ENCODE measurements at regions of chr17 and their contacts with region 1.

Region 1: DNA sequence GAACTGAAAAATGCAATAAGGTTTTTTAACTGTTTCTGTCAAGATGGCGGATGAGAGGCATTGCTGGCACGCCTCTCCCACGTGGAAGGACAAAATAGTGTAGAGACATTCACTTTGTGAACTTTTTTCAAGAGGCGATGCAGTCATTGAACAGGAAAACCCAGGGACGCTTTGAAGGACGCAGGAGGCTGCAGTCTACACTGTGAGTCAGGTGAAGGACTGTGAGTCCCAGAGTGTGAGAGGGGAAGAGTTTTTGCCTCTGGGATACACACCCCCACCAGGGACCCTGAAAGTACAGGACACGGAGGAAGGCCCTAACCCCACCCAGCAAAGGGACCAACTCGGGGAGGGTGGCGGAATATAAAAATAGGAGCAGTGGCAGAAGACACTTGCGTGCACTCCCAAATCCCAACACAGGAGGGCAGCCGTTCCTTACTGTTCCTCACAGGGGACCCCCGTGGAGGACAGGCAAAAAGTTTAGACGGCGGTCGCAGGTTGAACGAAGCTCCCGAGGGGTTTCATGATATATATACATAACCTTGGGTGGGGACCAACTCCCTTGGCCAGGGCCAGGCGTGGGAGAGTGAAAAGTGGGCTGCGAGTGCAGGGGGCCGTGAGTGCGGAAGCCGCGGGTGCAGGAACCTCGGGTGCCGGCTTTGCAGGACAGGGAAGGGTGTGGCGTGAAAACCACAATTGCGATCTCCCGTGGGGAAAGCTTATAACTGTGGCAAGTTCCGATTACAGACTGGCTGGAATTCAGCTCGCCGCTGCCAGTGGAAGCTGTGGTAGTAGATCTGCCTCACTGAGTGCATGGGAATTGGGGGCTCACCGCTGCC is 82.0 kb upstream of the ALOX12 start:
- DNase-seq: peak; percentile 52 to 84 (median 68)
- H3K4me3 ChIP-seq: peak overlapping the region; percentile 60
- H3K4me3 Mint-ChIP-seq: peak overlapping the region in 6 of 7 donors; percentile 74 to 94 (median 84)
- H3K27ac ChIP-seq: no peak overlapping the region
- H3K27ac Mint-ChIP-seq: peak overlapping the region in 5 of 8 donors; percentile 5 to 93 (median 77)
- H3K4me1 ChIP-seq: peaks cover 5% of the 10 kb centered on the region
- H3K4me1 Mint-ChIP-seq: peaks cover 8 to 15% (median 13%) of the 10 kb centered on the region in 3 donors
- H3K27me3 ChIP-seq: no peaks in the 10 kb centered on the region
- H3K27me3 Mint-ChIP-seq: peaks cover 4 to 15% of the 10 kb centered on the region in 2 donors

Region 2: DNA sequence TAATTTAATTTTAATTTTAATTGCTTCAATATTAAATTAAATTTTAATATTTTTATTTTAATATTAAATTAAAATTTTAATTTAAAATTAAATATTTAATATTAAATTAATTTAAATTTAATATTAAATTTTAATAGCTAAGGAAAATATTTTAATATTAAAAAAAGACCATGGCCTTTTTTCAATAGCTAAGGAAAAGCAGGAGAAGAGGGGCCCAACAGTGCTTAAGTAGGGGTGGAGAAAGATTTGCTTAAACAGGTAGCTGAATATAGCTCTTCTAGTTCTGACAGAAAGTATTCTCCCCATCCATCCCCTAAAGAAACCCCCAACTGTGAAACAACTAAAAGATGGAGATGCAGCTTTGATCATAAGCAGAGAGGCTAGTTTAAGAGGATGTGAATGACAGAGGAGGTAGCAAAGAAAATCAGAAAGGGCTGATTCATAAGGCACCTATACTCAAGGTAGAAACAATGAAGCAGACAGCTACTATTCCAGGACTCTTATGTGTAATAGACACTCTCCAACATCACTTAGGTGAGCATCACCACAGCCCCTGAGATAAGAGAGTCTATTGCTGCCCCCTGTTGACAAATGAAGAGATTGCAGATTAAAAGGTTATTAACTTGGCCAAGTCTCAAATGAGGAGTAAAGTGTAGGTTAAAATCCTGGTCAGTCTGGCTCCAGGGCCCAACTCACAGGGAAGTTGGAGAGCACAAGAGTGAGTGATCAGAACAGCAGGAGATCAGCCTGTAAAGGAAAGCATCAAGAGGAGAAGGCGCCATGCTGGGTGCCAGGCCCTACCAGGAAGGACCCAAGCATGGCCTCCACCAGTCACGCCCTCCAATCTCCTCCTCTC is 90.8 kb after region 1 on chr17:
- CTCF ChIA-PET with region 1: interaction called, 98 read pairs
- POLR2A ChIA-PET with region 1: interaction called, 3 read pairs
- DNase-seq: peak in 2 of 5 donors; percentile 69 to 76
- H3K4me3 ChIP-seq: no peak overlapping the region
- H3K4me3 Mint-ChIP-seq: peak overlapping the region in 1 of 7 donors; percentile 18
- H3K27ac ChIP-seq: no peak overlapping the region
- H3K27ac Mint-ChIP-seq: peak overlapping the region in 7 of 8 donors; percentile 7 to 88 (median 67)
- H3K4me1 ChIP-seq: peaks cover 3% of the 10 kb centered on the region
- H3K4me1 Mint-ChIP-seq: peaks cover 25 to 39% (median 36%) of the 10 kb centered on the region in 3 donors
- H3K27me3 ChIP-seq: no peaks in the 10 kb centered on the region
- H3K27me3 Mint-ChIP-seq: peaks cover 0 to 1% of the 10 kb centered on the region in 2 donors

Region 3: DNA sequence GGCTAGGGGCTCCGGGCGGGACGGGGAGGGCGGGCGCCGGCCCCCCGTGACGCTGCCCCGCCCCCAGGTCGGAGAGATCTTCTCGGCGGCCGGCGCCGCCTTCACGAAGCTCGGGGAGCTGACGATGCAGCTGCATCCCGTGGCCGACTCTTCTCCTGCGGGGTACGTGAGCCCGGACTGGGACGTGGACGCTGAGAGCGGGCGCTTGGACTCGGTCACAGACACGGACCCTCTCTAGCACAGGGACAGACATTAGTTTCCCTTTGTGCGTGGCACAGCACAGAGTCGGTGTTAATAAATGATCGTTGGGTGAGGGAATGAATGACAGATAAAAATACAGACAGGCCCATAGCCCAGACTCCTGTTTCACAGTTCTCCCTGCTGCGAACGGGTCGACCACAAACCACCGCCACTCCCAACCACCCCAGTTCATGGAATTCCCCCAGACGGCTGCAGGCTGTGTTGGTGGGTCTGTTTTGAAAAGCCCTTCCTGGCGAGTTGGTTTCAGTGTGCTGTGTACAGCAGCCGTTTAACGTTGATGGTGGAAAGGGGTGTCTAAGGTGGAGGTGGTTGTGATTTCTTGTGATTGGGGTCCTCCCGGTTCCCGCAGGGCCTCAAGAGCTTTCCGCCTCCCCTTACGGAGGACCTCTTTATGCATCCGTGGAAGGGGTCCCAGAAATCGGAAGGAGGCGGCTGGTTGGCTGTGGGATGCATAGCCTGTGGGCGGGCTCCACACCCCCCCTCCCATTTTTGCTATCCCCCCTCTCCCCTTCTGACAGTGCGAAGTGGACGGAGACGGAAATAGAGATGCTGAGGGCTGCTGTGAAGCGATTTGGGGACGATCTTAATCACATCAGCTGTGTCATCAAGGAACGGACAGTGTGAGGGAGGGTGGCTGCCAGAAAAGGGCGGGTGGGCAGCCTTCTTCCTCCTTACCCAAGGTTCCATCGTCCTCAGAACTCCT is 101.5 kb after region 1 on chr17:
- CTCF ChIA-PET with region 1: interaction called, 51 read pairs
- POLR2A ChIA-PET with region 1: interaction called, 3 read pairs
- DNase-seq: peak; percentile 79 to 89 (median 85)
- H3K4me3 ChIP-seq: peak overlapping the region; percentile 91
- H3K4me3 Mint-ChIP-seq: peak overlapping the region; percentile 92 to 98 (median 95)
- H3K27ac ChIP-seq: peak overlapping the region; percentile 100
- H3K27ac Mint-ChIP-seq: peak overlapping the region; percentile 97 to 100 (median 99)
- H3K4me1 ChIP-seq: peaks cover 58% of the 10 kb centered on the region
- H3K4me1 Mint-ChIP-seq: peaks cover 61 to 75% (median 67%) of the 10 kb centered on the region in 3 donors
- H3K27me3 ChIP-seq: no peaks in the 10 kb centered on the region
- H3K27me3 Mint-ChIP-seq: peaks cover 0 to 1% of the 10 kb centered on the region in 2 donors

Region 4: GRCh38 chr17:7035591-7036368 is 122.0 kb after region 1 on chr17 and contains the start of gene SLC16A13:
- CTCF ChIA-PET with region 1: interaction called, 11 read pairs
- POLR2A ChIA-PET with region 1: no interaction called
- DNase-seq: peak; percentile 96 to 99 (median 98)
- H3K4me3 ChIP-seq: peak within 1 kb of the TSS; percentile 99
- H3K4me3 Mint-ChIP-seq: peak within 1 kb of the TSS; percentile 86 to 98 (median 94)
- H3K27ac ChIP-seq: peak within 1 kb of the TSS; percentile 98
- H3K27ac Mint-ChIP-seq: peak within 1 kb of the TSS; percentile 95 to 99 (median 98)
- H3K4me1 ChIP-seq: peaks cover 52% of the 10 kb centered on the region
- H3K4me1 Mint-ChIP-seq: peaks cover 45 to 65% (median 52%) of the 10 kb centered on the region in 3 donors
- H3K27me3 ChIP-seq: no peaks in the 10 kb centered on the region
- H3K27me3 Mint-ChIP-seq: no peaks in the 10 kb centered on the region
- total RNA-seq, gene SLC16A13: 7.7 to 8.1 TPM